ENCODE measurements at regions of chr5 and their contacts with region 1.

Region 1: DNA sequence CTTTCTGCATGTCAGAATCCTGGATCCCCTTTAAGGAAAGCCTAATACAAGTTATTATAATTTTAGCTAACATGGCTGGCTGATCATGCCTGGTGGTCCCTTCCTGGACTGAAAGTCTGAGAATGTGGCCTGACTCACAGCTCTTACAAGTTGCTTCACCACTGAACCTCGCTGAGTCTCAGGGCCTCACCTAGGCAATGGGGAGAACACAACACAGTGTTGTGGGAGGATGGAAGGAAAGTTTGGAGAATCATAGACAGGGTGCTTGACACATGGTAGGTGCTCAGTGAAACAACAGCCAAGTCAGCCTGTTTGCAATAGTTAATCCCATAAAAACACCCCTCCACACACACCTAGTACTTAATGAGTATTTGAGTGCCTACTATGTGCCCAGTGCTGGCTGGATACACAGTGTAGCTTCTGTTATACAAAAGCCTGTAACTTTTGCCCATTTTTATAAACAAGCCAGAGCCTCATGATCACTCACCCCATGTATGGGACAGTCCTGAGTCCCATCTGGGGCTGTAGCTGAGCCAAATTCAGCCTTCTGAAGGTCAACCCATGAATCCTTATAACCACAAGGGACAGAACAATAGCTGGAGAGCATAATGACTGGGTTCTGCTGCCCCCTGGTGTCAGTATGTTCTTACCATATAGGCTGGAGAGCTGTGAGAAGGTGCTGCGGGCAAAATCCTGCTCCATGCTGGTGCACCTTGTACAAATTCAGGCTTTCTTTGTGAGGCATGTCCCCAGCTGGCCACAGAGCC is 3.9 kb downstream of the ACSL6 start:
- DNase-seq: peak; percentile 50 to 98 (median 89)

Region 2: DNA sequence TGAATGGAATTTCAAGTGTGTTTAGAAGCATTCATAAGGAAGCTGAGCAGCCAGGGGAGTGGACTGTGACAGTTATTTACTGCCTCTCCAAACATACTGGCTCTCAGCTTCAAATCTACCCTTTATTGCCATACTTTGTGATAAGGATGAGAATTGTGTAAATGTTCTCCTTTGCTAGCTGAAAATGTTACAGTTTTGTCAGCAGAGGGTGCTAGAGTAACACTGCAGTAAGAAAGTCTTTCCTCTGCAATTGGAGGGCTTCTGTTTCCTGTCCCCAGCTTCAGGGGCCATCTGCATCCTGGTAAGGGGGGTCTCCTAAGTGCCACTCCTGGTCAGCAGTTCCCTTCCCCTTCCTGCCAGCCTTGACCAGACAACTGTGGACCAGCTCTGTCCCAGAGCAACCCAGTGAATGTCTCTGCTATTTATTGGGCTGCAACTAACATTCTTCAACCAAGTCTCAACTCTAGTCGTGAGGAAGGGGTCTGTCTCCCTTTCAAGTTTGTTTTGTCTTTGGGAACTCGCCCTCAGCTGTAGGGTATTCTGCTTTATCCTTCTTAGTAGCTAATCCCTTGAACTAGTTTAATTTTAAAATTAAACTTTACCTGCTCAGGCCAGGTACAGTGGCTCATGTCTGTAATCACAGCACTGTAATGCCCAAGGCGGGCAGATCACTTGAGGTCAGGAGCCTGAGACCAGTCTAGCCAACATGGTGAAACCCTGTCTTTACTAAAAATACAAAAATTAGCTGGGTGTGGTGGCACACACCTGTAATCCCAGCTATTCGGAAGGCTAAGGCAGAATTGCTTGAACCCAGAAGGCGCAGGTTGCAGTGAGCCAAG is 417.9 kb before region 1 on chr5:
- intact Hi-C with region 1: loop called (anchors 2 kb)
- DNase-seq: peak in 25 of 42 donors; percentile 6 to 73 (median 33)

Region 3: DNA sequence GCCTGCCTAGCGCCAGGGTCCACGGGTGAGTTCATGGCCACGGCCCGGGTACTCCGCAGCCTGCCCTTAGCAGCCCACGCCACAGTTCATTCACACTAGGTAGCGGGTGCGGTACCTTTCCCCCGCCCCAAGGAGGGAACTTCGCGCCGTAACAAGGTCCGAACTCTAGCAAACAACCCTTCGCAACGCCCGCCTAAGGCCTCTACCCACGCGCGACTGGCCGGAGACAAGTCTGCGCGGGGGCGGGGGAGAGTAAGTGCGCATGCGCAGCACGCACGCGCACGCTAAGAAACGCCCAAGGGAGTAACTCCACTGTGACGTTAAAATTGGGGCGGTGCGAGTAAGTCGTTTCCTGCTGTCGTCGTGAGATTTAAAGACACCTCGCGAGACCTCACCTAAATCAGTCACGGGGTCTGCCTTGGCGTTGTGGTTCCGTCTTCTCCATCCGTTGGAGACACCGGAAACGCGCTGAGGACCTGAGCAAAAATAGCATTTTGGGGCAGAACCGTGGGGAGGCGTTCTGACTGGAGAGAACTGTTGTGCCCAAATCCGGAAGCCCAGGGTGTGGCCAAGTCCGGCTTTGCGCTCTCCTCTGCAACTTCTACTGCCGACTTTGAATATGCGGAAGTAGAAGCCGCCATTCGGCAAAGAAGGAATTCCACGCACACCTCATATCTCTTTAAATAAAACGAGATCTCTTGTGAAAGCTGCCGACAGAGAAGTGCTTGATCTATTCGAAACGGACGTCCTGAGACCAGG is 372.4 kb before region 1 on chr5 and contains the start of gene RAPGEF6:
- intact Hi-C with region 1: loop called (anchors 10 kb)
- DNase-seq: peak; percentile 90 to 99 (median 97)

Region 4: GRCh38 chr5:131796793-131797693 is 210.5 kb before region 1 on chr5 and contains the start of gene FNIP1:
- intact Hi-C with region 1: loop called (anchors 5 kb)
- DNase-seq: peak; percentile 98 to 100 (median 100)

Region 5: GRCh38 chr5:131810510-131811249 is 196.9 kb before region 1 on chr5:
- intact Hi-C with region 1: loop called (anchors 5 kb)
- DNase-seq: peak in 17 of 42 donors; percentile 13 to 69 (median 24)

Measured in head of caudate nucleus (tissue), 42 donors.